Activated T-helper 1 cell treated with anti-CD3 and anti-CD28 coated beads, Interleukin-12 subunit alpha, Interleukin-12 subunit beta, Interleukin-2, Interleukin-4 antibody, amounts not matched to agents 30 ng/mL and 10 ng/mL and 1 ng/mL, durations not matched to agents 14 hours and 24 hours and 36 hours (primary cell): ENCODE measurements at regions of chr2 and their contacts with region 1.

Region 1: DNA sequence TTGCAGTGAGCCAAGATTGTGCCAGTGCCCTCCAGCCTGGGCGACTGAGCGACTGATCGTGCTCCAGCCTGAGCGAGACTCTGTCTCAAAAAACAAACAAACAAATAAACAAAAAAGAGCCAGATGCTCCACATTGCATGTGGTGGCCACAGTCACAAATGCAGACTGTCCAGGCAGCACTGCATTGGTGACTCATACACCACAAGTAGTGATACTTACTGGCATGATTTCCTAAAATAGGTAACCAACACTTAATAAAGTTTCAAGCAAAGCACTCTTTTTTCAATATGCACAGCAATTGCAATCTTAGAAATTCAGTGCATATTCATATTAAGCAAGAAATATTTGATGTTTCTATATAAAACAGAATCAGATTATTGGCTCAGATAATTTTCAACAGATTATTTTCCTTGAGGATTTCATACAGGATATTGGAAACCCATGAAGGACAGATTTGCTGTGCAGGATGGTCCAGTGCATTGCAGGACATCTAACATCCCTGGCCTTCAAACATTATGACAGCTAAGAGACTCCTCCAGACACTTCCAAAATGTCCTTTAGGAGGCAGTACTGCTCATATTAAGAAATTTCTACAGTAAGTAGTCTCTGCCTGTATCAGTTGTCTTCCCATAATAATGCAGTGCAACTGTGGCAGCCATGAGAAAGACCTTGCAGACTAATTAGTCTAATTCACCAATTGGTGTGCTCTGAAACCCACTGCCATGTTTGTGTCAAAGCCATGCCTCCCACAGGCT is 10.5 kb upstream of the SLC1A4 start:
- DNase-seq: no peak
- H3K4me3 Mint-ChIP-seq: no peak overlapping the region
- H3K27ac Mint-ChIP-seq: no peak overlapping the region
- H3K4me1 Mint-ChIP-seq: peaks cover 35% of the 10 kb centered on the region
- H3K27me3 Mint-ChIP-seq: peaks cover 2% of the 10 kb centered on the region

Region 2: GRCh38 chr2:64945973-64946768 is 32.5 kb before region 1 on chr2:
- intact Hi-C with region 1: loop called (anchors 1 kb)
- DNase-seq: peak; percentile 71
- H3K4me3 Mint-ChIP-seq: peak overlapping the region; percentile 73
- H3K27ac Mint-ChIP-seq: peak overlapping the region; percentile 93
- H3K4me1 Mint-ChIP-seq: peaks cover 62% of the 10 kb centered on the region
- H3K27me3 Mint-ChIP-seq: no peaks in the 10 kb centered on the region

Region 3: GRCh38 chr2:65040400-65041261 is 61.9 kb after region 1 on chr2:
- intact Hi-C with region 1: loop called (anchors 2 kb)
- DNase-seq: peak; percentile 67
- H3K4me3 Mint-ChIP-seq: no peak overlapping the region
- H3K27ac Mint-ChIP-seq: no peak overlapping the region
- H3K4me1 Mint-ChIP-seq: peaks cover 25% of the 10 kb centered on the region
- H3K27me3 Mint-ChIP-seq: no peaks in the 10 kb centered on the region